ENCODE measurements at regions of chr10 and their contacts with region 1.

Region 1: DNA sequence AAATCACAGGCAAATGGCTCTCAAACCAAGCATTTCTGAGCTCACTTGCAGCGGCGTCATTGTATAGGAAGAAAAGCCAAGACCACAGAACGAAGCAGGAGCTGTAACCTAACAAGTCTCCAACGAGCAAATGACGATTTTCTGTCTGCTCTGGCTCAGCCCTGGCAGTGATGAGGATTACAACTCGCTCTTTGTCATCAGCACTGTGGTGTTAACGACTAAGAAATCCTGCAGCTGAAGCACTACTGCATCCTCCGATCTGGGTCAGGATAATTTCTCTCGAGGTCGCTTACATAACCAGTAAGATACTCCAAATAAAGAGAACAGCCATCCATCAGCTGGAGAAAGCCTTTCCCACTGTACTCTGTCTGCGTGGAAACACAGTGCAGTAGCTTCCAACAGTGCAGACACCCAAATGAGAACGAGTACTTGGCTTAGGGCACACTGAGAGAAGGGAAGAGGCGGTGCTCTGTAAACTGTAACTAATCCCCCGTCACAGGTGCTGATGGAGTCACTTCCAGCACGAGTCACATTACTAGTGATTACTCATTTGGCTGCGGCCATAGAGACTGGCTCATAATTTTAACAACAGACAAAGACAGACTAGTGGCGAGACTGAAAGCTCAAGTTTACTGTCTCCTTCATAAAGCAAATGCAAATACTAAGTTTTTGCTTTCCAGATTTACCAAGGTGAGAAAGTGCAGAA is 135.8 kb downstream of the NRBF2 start:
- DNase-seq: peak; percentile 86 to 95 (median 92)
- H3K4me3 ChIP-seq: peak overlapping the region; percentile 59 to 83
- H3K4me3 Mint-ChIP-seq: peak overlapping the region; percentile 96 to 100 (median 98)
- H3K27ac ChIP-seq: peak overlapping the region; percentile 94
- H3K27ac Mint-ChIP-seq: peak overlapping the region; percentile 95 to 100 (median 100)
- H3K4me1 ChIP-seq: peaks cover 35% of the 10 kb centered on the region
- H3K4me1 Mint-ChIP-seq: peaks cover 10 to 25% (median 19%) of the 10 kb centered on the region in 4 donors
- H3K27me3 ChIP-seq: no peaks in the 10 kb centered on the region
- H3K27me3 Mint-ChIP-seq: no peaks in the 10 kb centered on the region

Region 2: DNA sequence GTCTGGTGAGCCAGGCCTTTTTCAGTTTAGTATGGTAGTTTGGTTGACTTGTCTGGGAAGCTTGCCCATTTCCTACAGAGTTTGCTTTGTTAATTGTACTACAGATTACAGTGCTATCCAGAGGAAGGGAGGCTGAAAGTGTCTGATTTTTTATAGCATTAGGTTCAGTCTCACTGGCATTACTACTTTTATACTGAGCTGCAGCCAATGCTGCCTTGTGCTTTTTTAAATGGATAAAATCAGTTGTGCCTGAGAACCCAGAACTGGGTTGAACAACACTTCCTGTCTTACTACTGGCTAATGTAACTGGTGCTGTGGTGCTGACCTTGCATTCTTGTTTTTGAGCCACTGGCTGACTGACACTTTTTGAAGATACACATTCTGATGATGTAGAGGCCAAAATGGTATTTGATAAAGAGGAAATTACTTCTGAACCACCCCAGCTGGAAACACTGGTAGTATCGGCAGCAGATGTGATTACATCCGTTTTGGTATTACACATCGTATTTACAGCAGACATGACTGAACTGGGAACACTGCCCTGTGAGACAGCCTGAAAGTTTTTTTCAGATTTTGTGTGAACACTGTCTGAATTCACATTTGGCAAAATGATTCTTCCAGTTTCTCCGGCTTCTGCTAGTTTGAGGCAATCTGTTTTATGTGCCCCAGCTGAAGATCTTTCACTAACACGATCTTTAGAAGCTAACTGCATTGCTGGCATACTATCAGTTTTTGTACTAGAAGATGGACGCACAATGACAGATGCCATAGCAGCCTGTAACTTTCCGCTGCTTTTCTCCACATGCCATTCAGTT is 61.7 kb before region 1 on chr10:
- CTCF ChIA-PET with region 1: interaction called, 4 read pairs
- POLR2A ChIA-PET with region 1: interaction called, 17 read pairs
- intact Hi-C with region 1: no loop called
- DNase-seq: peak in 1 of 5 donors; percentile 6
- H3K4me3 ChIP-seq: no peak overlapping the region
- H3K4me3 Mint-ChIP-seq: peak overlapping the region in 7 of 8 donors; percentile 51 to 70 (median 62)
- H3K27ac ChIP-seq: no peak overlapping the region
- H3K27ac Mint-ChIP-seq: peak overlapping the region; percentile 32 to 91 (median 66)
- H3K4me1 ChIP-seq: peaks cover 43% of the 10 kb centered on the region
- H3K4me1 Mint-ChIP-seq: peaks cover 46 to 65% (median 57%) of the 10 kb centered on the region in 4 donors
- H3K27me3 ChIP-seq: no peaks in the 10 kb centered on the region
- H3K27me3 Mint-ChIP-seq: no peaks in the 10 kb centered on the region

Region 3: DNA sequence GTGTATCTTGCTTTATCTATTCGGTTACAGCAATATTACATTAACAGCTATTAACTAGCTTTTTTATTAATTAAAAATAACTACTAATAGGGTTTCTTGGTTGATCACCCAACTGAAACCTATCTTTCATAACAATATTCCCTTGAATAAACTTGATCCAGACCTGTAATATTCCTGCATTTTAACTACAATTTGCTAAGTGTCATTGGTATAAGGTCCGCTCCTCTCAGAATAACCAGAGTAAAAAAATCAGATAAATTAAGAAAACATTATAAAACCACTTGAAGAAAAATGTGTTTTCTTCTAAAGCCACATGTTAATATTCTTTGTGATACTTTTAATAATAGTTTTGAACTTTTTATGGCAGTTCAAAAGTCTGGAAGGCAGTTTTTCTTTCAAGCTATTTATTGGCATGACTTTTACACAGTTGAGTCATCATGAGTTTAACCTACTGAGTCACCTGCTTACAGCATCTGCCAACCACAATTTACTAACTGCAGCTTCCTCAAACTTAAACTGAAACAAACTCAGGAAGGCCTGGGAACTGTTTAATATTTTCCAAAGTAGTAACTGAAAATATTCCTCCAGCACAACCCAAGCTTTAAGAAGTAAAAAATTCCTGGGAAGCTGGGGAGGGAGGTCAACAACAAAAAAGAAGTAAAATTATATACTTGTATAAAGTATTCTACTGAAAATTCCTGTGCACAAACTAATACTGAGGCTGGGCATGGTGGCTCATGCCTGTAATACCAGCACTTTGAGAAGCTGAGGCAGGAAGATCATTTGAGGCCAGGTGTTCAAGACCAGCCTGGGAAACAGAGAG is 32.6 kb before region 1 on chr10:
- CTCF ChIA-PET with region 1: interaction called, 3 read pairs
- POLR2A ChIA-PET with region 1: interaction called, 27 read pairs
- intact Hi-C with region 1: no loop called
- DNase-seq: peak in 4 of 5 donors; percentile 19 to 45 (median 22)
- H3K4me3 ChIP-seq: no peak overlapping the region
- H3K4me3 Mint-ChIP-seq: peak overlapping the region in 4 of 8 donors; percentile 23 to 59 (median 29)
- H3K27ac ChIP-seq: no peak overlapping the region
- H3K27ac Mint-ChIP-seq: peak overlapping the region in 6 of 7 donors; percentile 12 to 79 (median 29)
- H3K4me1 ChIP-seq: peaks cover 66% of the 10 kb centered on the region
- H3K4me1 Mint-ChIP-seq: peaks cover 33 to 62% (median 46%) of the 10 kb centered on the region in 4 donors
- H3K27me3 ChIP-seq: no peaks in the 10 kb centered on the region
- H3K27me3 Mint-ChIP-seq: no peaks in the 10 kb centered on the region

Region 4: DNA sequence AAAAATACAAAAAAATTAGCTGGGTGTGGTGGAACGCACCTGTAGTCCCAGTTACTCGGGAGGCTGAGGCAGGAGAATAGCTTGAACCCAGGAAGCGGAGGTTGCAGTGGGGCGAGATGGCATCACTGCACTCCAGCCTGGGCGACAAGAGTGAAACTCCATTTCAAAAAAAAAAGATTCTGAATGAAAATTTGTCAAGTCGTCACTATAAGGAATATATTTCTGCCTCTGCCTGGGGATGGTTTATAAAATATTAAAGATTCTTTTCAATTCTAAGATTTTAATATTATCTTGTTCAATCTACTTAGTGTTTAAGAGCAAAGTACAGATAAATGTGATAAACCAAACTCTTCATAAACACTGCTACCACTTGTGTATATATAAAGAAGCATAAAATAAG is 11.4 kb after region 1 on chr10:
- CTCF ChIA-PET with region 1: interaction called, 5 read pairs
- POLR2A ChIA-PET with region 1: interaction called, 13 read pairs
- intact Hi-C with region 1: no loop called
- DNase-seq: no peak
- H3K4me3 ChIP-seq: no peak overlapping the region
- H3K4me3 Mint-ChIP-seq: no peak overlapping the region
- H3K27ac ChIP-seq: no peak overlapping the region
- H3K27ac Mint-ChIP-seq: no peak overlapping the region
- H3K4me1 ChIP-seq: no peaks in the 10 kb centered on the region
- H3K4me1 Mint-ChIP-seq: peaks cover 4 to 9% (median 6%) of the 10 kb centered on the region in 4 donors
- H3K27me3 ChIP-seq: no peaks in the 10 kb centered on the region
- H3K27me3 Mint-ChIP-seq: no peaks in the 10 kb centered on the region

Region 5: GRCh38 chr10:63515002-63515763 is 246.2 kb after region 1 on chr10:
- CTCF ChIA-PET with region 1: no interaction called
- POLR2A ChIA-PET with region 1: interaction called, 58 read pairs
- intact Hi-C with region 1: no loop called
- DNase-seq: peak; percentile 10 to 60 (median 19)
- H3K4me3 ChIP-seq: no peak overlapping the region
- H3K4me3 Mint-ChIP-seq: peak overlapping the region; percentile 7 to 76 (median 34)
- H3K27ac ChIP-seq: no peak overlapping the region
- H3K27ac Mint-ChIP-seq: peak overlapping the region in 6 of 7 donors; percentile 2 to 87 (median 53)
- H3K4me1 ChIP-seq: peaks cover 51% of the 10 kb centered on the region
- H3K4me1 Mint-ChIP-seq: peaks cover 53 to 79% (median 65%) of the 10 kb centered on the region in 4 donors
- H3K27me3 ChIP-seq: no peaks in the 10 kb centered on the region
- H3K27me3 Mint-ChIP-seq: no peaks in the 10 kb centered on the region

Measured in CD4-positive, alpha-beta memory T cell (primary cell).